ENCODE measurements at regions of chr10 and their contacts with region 1.

Region 1: DNA sequence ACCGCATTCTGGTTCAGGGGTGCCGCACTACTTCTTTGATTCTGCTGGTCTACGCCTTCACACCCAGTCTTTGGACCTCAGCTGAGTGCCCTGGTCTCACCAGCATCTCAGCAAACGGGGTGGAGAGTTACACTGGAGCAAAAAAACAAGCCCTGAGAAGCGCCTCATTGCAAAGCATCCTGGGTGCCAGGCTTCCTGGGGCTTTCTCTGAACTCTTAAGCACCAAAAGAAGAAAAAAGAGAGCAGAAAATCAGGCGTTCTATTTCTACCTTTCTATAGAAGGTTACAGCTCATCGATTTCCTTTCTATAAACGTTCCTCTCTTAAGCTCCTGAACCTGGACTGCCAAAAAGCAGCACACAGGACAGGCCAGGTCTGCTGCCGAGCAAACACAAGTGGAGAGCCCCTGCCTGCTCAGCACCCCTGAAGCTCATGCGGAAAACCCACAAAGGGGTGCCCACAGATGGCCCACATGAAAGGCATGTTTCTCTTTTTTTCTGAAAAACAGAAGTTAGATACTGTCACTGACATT is 217.9 kb downstream of the SFMBT2 start:
- DNase-seq: peak; percentile 62
- H3K4me3 Mint-ChIP-seq: peak overlapping the region; percentile 58
- H3K27ac Mint-ChIP-seq: peak overlapping the region; percentile 97
- H3K4me1 Mint-ChIP-seq: peaks cover 59% of the 10 kb centered on the region
- H3K27me3 Mint-ChIP-seq: no peaks in the 10 kb centered on the region

Region 2: GRCh38 chr10:6778992-6779701 is 413.7 kb before region 1 on chr10:
- intact Hi-C with region 1: no loop called
- DNase-seq: no peak
- H3K4me3 Mint-ChIP-seq: no peak overlapping the region
- H3K27ac Mint-ChIP-seq: no peak overlapping the region
- H3K4me1 Mint-ChIP-seq: no peaks in the 10 kb centered on the region
- H3K27me3 Mint-ChIP-seq: peaks cover 36% of the 10 kb centered on the region

Region 3: DNA sequence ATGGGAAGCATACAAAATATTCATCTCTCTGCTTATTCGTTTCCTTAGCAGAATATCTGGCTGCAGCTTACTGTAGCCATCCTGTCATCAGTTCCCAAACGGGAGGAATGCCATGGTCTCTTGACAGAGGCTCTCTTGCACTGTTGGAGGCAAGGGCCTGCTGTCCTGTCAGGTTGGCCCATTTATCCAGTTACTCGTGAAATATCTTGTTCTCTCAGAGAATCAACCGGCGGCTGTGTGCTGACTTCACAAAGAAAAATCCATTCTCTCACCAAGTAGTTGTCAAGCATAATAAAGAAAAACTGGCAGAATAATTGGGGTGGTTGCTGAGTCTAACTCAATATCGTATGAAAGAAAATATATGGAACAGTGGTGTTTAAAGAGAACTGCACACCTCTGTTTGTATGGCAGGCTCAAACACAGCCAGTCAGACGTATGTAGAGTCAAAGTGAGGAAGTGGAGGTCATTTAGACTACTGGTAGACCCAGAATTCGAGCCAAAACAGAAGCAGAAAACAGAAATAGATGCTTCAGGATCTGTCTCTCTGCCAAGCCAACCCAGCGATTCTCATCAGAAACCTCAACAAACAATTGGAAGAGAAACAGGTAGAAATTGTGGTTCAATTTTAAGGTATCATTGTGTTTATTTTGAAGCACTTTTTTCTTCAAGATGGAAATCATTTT is 263.6 kb before region 1 on chr10:
- intact Hi-C with region 1: loop called (anchors 2 kb)
- DNase-seq: no peak
- H3K4me3 Mint-ChIP-seq: no peak overlapping the region
- H3K27ac Mint-ChIP-seq: no peak overlapping the region
- H3K4me1 Mint-ChIP-seq: peaks cover 42% of the 10 kb centered on the region
- H3K27me3 Mint-ChIP-seq: peaks cover 6% of the 10 kb centered on the region

Region 4: DNA sequence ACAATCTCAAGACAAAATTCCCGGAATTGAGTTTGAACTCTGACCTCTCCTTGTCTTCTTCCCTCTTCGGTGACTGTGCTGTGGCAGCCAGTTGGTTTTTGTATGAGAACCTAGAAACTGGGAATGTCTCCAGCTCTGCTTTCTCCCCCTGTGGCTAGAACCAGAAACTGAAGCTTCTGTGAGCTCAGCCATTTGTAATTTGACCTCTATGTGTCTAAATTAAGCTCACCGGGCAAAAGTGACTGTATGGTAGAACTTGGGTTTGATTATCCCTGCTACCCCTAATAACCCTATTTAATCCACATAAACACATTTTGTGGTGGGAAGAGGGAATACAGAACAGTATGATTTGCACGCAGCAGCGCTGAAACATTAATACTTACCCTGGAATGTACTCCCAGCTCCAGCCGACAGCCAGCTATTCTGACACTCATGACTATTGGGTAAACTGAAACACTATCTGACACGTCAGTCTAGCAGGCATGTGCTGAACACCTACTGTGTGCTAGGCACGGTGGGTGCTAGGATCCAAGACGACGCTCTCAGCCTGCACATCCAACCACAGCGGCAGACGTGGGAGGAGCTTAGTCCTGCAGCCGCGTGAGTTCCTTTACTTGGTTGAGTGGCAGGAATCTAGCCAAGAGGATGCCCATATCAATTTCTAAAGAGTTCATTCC is 106.8 kb before region 1 on chr10:
- intact Hi-C with region 1: no loop called
- DNase-seq: no peak
- H3K4me3 Mint-ChIP-seq: no peak overlapping the region
- H3K27ac Mint-ChIP-seq: no peak overlapping the region
- H3K4me1 Mint-ChIP-seq: no peaks in the 10 kb centered on the region
- H3K27me3 Mint-ChIP-seq: peaks cover 43% of the 10 kb centered on the region

Region 5: GRCh38 chr10:7121154-7121810 is 71.6 kb before region 1 on chr10:
- intact Hi-C with region 1: loop called (anchors 5 kb)
- DNase-seq: peak; percentile 43
- H3K4me3 Mint-ChIP-seq: no peak overlapping the region
- H3K27ac Mint-ChIP-seq: no peak overlapping the region
- H3K4me1 Mint-ChIP-seq: peaks cover 4% of the 10 kb centered on the region
- H3K27me3 Mint-ChIP-seq: peaks cover 48% of the 10 kb centered on the region

Region 6: GRCh38 chr10:7687228-7687907 is 494.5 kb after region 1 on chr10:
- intact Hi-C with region 1: no loop called
- DNase-seq: peak; percentile 72
- H3K4me3 Mint-ChIP-seq: no peak overlapping the region
- H3K27ac Mint-ChIP-seq: no peak overlapping the region
- H3K4me1 Mint-ChIP-seq: peaks cover 10% of the 10 kb centered on the region
- H3K27me3 Mint-ChIP-seq: peaks cover 29% of the 10 kb centered on the region